ENCODE measurements at regions of chr17 and their contacts with region 1.

Region 1: GRCh38 chr17:68457539-68458259 is 403 bp upstream of the WIPI1 start:
- DNase-seq: peak; percentile 96 to 99 (median 98)
- ATAC-seq: peak; percentile 96
- H3K4me3 ChIP-seq: peak overlapping the region; percentile 55 to 66
- H3K4me3 Mint-ChIP-seq: peak overlapping the region; percentile 83
- H3K27ac ChIP-seq: peak overlapping the region; percentile 58 to 78
- H3K27ac Mint-ChIP-seq: peak overlapping the region; percentile 92
- H3K4me1 ChIP-seq: peaks cover 45% of the 10 kb centered on the region
- H3K4me1 Mint-ChIP-seq: peaks cover 58% of the 10 kb centered on the region
- H3K27me3 ChIP-seq: no peaks in the 10 kb centered on the region
- H3K27me3 Mint-ChIP-seq: no peaks in the 10 kb centered on the region
- CTCF ChIP-seq: no peak

Region 2: DNA sequence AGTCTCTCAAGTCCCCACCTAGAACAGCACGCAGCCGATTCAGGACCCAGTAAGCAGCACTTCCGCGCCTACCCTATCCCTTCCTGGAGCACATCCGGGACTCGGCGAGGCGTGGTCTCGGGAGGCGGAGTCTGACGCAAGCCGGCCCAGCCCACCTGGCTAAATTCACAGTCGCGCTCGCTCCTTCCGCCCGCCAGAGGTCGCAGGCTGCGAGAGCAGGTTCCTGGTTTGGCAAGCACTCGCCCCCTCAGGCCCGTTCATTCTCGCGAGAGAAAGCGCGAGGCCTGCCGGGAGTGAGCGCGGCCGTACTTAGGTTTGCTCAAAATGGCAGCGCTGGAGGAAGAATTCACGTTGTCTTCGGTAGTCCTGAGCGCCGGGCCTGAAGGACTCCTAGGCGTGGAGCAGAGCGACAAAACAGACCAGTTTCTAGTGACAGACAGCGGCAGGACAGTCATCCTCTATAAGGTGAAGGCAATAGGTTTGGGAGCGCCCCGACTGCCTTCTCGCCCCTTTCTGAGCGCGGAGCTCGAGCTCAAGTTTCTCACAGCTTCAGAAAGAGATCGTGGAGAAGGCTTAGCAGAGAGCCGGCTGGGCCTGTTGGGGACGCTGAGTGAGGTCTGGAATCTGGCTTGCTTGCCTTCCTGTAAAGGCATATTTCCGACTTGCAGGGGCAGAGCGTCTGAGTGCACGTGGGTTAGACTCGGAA is 739.9 kb before region 1 on chr17 and contains the start of gene NOL11:
- CTCF ChIA-PET with region 1: no interaction called
- POLR2A ChIA-PET with region 1: no interaction called
- intact Hi-C with region 1: loop called (anchors 2 to 10 kb)
- DNase-seq: peak; percentile 99 to 100 (median 99)
- ATAC-seq: peak; percentile 94
- H3K4me3 ChIP-seq: peak within 1 kb of the TSS; percentile 93 to 98
- H3K4me3 Mint-ChIP-seq: peak within 1 kb of the TSS; percentile 99
- H3K27ac ChIP-seq: peak within 1 kb of the TSS; percentile 90 to 96
- H3K27ac Mint-ChIP-seq: peak within 1 kb of the TSS; percentile 99
- H3K4me1 ChIP-seq: peaks cover 20% of the 10 kb centered on the region
- H3K4me1 Mint-ChIP-seq: peaks cover 32% of the 10 kb centered on the region
- H3K27me3 ChIP-seq: no peaks in the 10 kb centered on the region
- H3K27me3 Mint-ChIP-seq: peaks cover 5% of the 10 kb centered on the region
- CTCF ChIP-seq: peak; percentile 72
- total RNA-seq, gene NOL11: 91.0 to 94.0 TPM

Region 3: GRCh38 chr17:68035523-68036303 is 422.0 kb before region 1 on chr17 and contains the start of gene KPNA2:
- CTCF ChIA-PET with region 1: no interaction called
- POLR2A ChIA-PET with region 1: no interaction called
- intact Hi-C with region 1: loop called (anchors 1 kb)
- DNase-seq: peak; percentile 80 to 96 (median 89)
- ATAC-seq: peak; percentile 84
- H3K4me3 ChIP-seq: peak within 1 kb of the TSS; percentile 97 to 99
- H3K4me3 Mint-ChIP-seq: peak within 1 kb of the TSS; percentile 90
- H3K27ac ChIP-seq: peak within 1 kb of the TSS; percentile 88 to 90
- H3K27ac Mint-ChIP-seq: peak within 1 kb of the TSS; percentile 95
- H3K4me1 ChIP-seq: peaks cover 8% of the 10 kb centered on the region
- H3K4me1 Mint-ChIP-seq: peaks cover 13% of the 10 kb centered on the region
- H3K27me3 ChIP-seq: no peaks in the 10 kb centered on the region
- H3K27me3 Mint-ChIP-seq: no peaks in the 10 kb centered on the region
- CTCF ChIP-seq: no peak
- total RNA-seq, gene KPNA2: 111 to 121 TPM

Region 4: GRCh38 chr17:68172461-68172954 is 285.2 kb before region 1 on chr17:
- CTCF ChIA-PET with region 1: interaction called, 10 read pairs
- POLR2A ChIA-PET with region 1: interaction called, 3 read pairs
- intact Hi-C with region 1: no loop called
- DNase-seq: peak; percentile 54 to 85 (median 80)
- ATAC-seq: peak; percentile 81
- H3K4me3 ChIP-seq: no peak overlapping the region
- H3K4me3 Mint-ChIP-seq: no peak overlapping the region
- H3K27ac ChIP-seq: no peak overlapping the region
- H3K27ac Mint-ChIP-seq: no peak overlapping the region
- H3K4me1 ChIP-seq: peaks cover 19% of the 10 kb centered on the region
- H3K4me1 Mint-ChIP-seq: peaks cover 37% of the 10 kb centered on the region
- H3K27me3 ChIP-seq: no peaks in the 10 kb centered on the region
- H3K27me3 Mint-ChIP-seq: no peaks in the 10 kb centered on the region
- CTCF ChIP-seq: peak; percentile 99

Region 5: DNA sequence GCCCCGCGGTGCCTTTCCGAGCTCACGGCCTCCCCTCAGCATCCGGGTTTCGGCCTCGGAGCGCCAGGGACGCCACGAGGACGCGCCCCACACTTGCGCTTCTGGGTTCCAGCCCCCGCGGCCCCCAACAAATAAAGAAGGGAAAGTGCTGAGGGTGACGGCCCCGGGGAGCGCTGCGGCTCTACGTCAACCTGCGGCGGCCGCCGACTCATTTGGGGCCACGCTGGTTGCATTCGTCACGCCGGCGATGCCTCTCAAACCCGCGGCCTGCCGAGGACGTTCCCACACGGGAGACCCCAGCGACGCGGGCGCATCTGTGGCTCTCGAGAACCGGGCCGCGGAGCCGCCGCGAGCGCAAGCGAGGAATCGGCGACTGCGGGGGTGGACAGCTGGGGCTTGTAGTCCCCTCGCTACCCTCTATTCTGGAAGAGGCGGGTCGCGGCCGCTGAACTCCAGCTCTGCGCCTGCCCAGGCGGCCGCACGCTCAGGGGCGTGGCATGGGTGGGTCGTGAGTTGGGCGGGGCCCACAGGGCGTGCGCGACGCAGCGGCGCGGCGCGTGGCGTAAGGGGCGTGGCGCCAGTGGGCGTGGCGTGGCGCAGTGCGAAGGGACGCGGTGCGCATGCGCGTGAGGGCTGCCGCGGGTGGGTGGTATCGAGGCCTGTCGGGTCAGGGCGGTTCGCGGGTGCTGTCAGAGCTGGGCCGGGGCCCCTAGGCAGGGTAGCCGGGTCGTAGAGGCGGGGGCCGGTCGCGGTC is 210.1 kb before region 1 on chr17 and contains the start of gene AMZ2:
- CTCF ChIA-PET with region 1: interaction called, 3 read pairs
- POLR2A ChIA-PET with region 1: interaction called, 18 read pairs
- intact Hi-C with region 1: loop called (anchors 1 kb)
- DNase-seq: peak; percentile 94 to 99 (median 98)
- ATAC-seq: peak; percentile 91
- H3K4me3 ChIP-seq: peak within 1 kb of the TSS; percentile 70 to 94
- H3K4me3 Mint-ChIP-seq: peak within 1 kb of the TSS; percentile 96
- H3K27ac ChIP-seq: peak within 1 kb of the TSS; percentile 93 to 96
- H3K27ac Mint-ChIP-seq: peak within 1 kb of the TSS; percentile 98
- H3K4me1 ChIP-seq: peaks cover 34% of the 10 kb centered on the region
- H3K4me1 Mint-ChIP-seq: peaks cover 42% of the 10 kb centered on the region
- H3K27me3 ChIP-seq: no peaks in the 10 kb centered on the region
- H3K27me3 Mint-ChIP-seq: no peaks in the 10 kb centered on the region
- CTCF ChIP-seq: no peak
- total RNA-seq, gene AMZ2: 61.0 to 71.1 TPM

Region 6: DNA sequence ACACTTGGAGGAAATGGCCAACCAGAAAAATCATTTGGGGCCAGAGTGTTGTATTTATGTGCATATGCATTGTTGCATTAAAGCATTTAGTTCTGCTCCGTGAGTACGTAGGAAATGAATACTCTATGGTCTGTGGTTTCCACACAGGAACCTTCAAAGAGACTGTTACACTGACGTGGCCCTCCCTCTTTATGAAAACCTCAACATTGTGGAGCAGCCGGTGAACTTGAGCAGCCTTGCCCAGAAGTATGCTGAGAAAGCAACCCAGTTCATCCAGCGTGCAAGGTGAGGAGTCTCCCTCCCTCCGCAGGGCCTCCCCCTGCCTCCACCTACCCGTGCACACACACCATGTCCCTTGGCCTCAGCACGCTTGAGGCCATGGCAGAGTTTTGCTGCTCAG is 101.2 kb before region 1 on chr17:
- CTCF ChIA-PET with region 1: no interaction called
- POLR2A ChIA-PET with region 1: interaction called, 3 read pairs
- intact Hi-C with region 1: loop called in 1 of 2 experiments (anchors 5 kb)
- DNase-seq: peak; percentile 44 to 93 (median 69)
- ATAC-seq: peak; percentile 91
- H3K4me3 ChIP-seq: peak overlapping the region; percentile 7 to 12
- H3K4me3 Mint-ChIP-seq: peak overlapping the region; percentile 72
- H3K27ac ChIP-seq: peak overlapping the region; percentile 14 to 45
- H3K27ac Mint-ChIP-seq: peak overlapping the region; percentile 83
- H3K4me1 ChIP-seq: peaks cover 51% of the 10 kb centered on the region
- H3K4me1 Mint-ChIP-seq: peaks cover 57% of the 10 kb centered on the region
- H3K27me3 ChIP-seq: no peaks in the 10 kb centered on the region
- H3K27me3 Mint-ChIP-seq: no peaks in the 10 kb centered on the region
- CTCF ChIP-seq: no peak

Region 7: GRCh38 chr17:68468334-68468733 is 10.6 kb after region 1 on chr17:
- CTCF ChIA-PET with region 1: interaction called, 22 read pairs
- POLR2A ChIA-PET with region 1: no interaction called
- intact Hi-C with region 1: no loop called
- DNase-seq: no peak
- ATAC-seq: no peak
- H3K4me3 ChIP-seq: no peak overlapping the region
- H3K4me3 Mint-ChIP-seq: no peak overlapping the region
- H3K27ac ChIP-seq: no peak overlapping the region
- H3K27ac Mint-ChIP-seq: no peak overlapping the region
- H3K4me1 ChIP-seq: no peaks in the 10 kb centered on the region
- H3K4me1 Mint-ChIP-seq: no peaks in the 10 kb centered on the region
- H3K27me3 ChIP-seq: no peaks in the 10 kb centered on the region
- H3K27me3 Mint-ChIP-seq: no peaks in the 10 kb centered on the region
- CTCF ChIP-seq: no peak